Breast epithelium (tissue), 4 donors: ENCODE measurements at regions of chr4 and their contacts with region 1.

Region 1: GRCh38 chr4:114839986-114840385 is 241.4 kb downstream of the UGT8 start:
- DNase-seq: no peak
- H3K4me3 ChIP-seq: no peak overlapping the region
- H3K27ac ChIP-seq: no peak overlapping the region
- H3K4me1 ChIP-seq: no peaks in the 10 kb centered on the region
- H3K27me3 ChIP-seq: no peaks in the 10 kb centered on the region
- CTCF ChIP-seq: no peak
- POLR2A ChIP-seq: no peak

Region 2: GRCh38 chr4:113355550-113356371 is 1484.2 kb before region 1 on chr4:
- intact Hi-C with region 1: no loop called
- DNase-seq: no peak
- H3K4me3 ChIP-seq: peak overlapping the region in 1 of 3 donors; percentile 19
- H3K27ac ChIP-seq: peak overlapping the region in 1 of 2 donors; percentile 35
- H3K4me1 ChIP-seq: no peaks in the 10 kb centered on the region
- H3K27me3 ChIP-seq: no peaks in the 10 kb centered on the region
- CTCF ChIP-seq: no peak
- POLR2A ChIP-seq: no peak

Region 3: GRCh38 chr4:114725066-114725465 is 114.9 kb before region 1 on chr4:
- intact Hi-C with region 1: no loop called
- DNase-seq: no peak
- H3K4me3 ChIP-seq: no peak overlapping the region
- H3K27ac ChIP-seq: no peak overlapping the region
- H3K4me1 ChIP-seq: no peaks in the 10 kb centered on the region
- H3K27me3 ChIP-seq: no peaks in the 10 kb centered on the region
- CTCF ChIP-seq: no peak
- POLR2A ChIP-seq: no peak

Region 4: GRCh38 chr4:115515772-115516171 is 675.8 kb after region 1 on chr4:
- intact Hi-C with region 1: loop called (anchors 5 kb)
- DNase-seq: no peak
- H3K4me3 ChIP-seq: no peak overlapping the region
- H3K27ac ChIP-seq: no peak overlapping the region
- H3K4me1 ChIP-seq: no peaks in the 10 kb centered on the region
- H3K27me3 ChIP-seq: no peaks in the 10 kb centered on the region
- CTCF ChIP-seq: no peak
- POLR2A ChIP-seq: no peak